ENCODE measurements at regions of chr10 and their contacts with region 1.

Region 1: GRCh38 chr10:73625884-73626752 is 15.2 kb downstream of the MYOZ1 start:
- DNase-seq: peak; percentile 84 to 99 (median 92)
- ATAC-seq: peak; percentile 90
- H3K4me3 ChIP-seq: peak overlapping the region; percentile 78 to 90
- H3K4me3 Mint-ChIP-seq: peak overlapping the region; percentile 95
- H3K27ac ChIP-seq: peak overlapping the region; percentile 84 to 86
- H3K27ac Mint-ChIP-seq: peak overlapping the region; percentile 98
- H3K4me1 ChIP-seq: peaks cover 16% of the 10 kb centered on the region
- H3K4me1 Mint-ChIP-seq: peaks cover 21% of the 10 kb centered on the region
- H3K27me3 ChIP-seq: no peaks in the 10 kb centered on the region
- H3K27me3 Mint-ChIP-seq: no peaks in the 10 kb centered on the region
- CTCF ChIP-seq: no peak

Region 2: GRCh38 chr10:73167783-73168464 is 458.2 kb before region 1 on chr10 and contains the starts of genes ECD and FAM149B1:
- CTCF ChIA-PET with region 1: no interaction called
- POLR2A ChIA-PET with region 1: no interaction called
- intact Hi-C with region 1: loop called (anchors 5 kb)
- DNase-seq: peak; percentile 74 to 96 (median 91)
- ATAC-seq: peak; percentile 93
- H3K4me3 ChIP-seq: peak within 1 kb of the TSS; percentile 77 to 92
- H3K4me3 Mint-ChIP-seq: peak within 1 kb of the TSS; percentile 100
- H3K27ac ChIP-seq: peak within 1 kb of the TSS; percentile 93 to 97
- H3K27ac Mint-ChIP-seq: peak within 1 kb of the TSS; percentile 100
- H3K4me1 ChIP-seq: peaks cover 29% of the 10 kb centered on the region
- H3K4me1 Mint-ChIP-seq: peaks cover 42% of the 10 kb centered on the region
- H3K27me3 ChIP-seq: no peaks in the 10 kb centered on the region
- H3K27me3 Mint-ChIP-seq: no peaks in the 10 kb centered on the region
- CTCF ChIP-seq: peak; percentile 16
- total RNA-seq, gene ECD: 56.5 to 59.1 TPM
- total RNA-seq, gene FAM149B1: 5.9 to 6.3 TPM

Region 3: GRCh38 chr10:73252445-73253224 is 373.5 kb before region 1 on chr10 and contains the start of gene MRPS16:
- CTCF ChIA-PET with region 1: no interaction called
- POLR2A ChIA-PET with region 1: no interaction called
- intact Hi-C with region 1: loop called (anchors 2 kb)
- DNase-seq: peak; percentile 86 to 97 (median 93)
- ATAC-seq: peak; percentile 90
- H3K4me3 ChIP-seq: peak within 1 kb of the TSS; percentile 87 to 96
- H3K4me3 Mint-ChIP-seq: peak within 1 kb of the TSS; percentile 99
- H3K27ac ChIP-seq: peak within 1 kb of the TSS; percentile 80 to 94
- H3K27ac Mint-ChIP-seq: peak within 1 kb of the TSS; percentile 96
- H3K4me1 ChIP-seq: peaks cover 19% of the 10 kb centered on the region
- H3K4me1 Mint-ChIP-seq: peaks cover 46% of the 10 kb centered on the region
- H3K27me3 ChIP-seq: no peaks in the 10 kb centered on the region
- H3K27me3 Mint-ChIP-seq: no peaks in the 10 kb centered on the region
- CTCF ChIP-seq: no peak
- total RNA-seq, gene MRPS16: 23.6 to 28.7 TPM

Region 4: GRCh38 chr10:73413528-73414229 is 212.4 kb before region 1 on chr10 and contains the start of gene ANXA7:
- CTCF ChIA-PET with region 1: no interaction called
- POLR2A ChIA-PET with region 1: interaction called, 4 read pairs
- intact Hi-C with region 1: loop called (anchors 1 to 2 kb)
- DNase-seq: peak; percentile 85 to 95 (median 94)
- ATAC-seq: peak; percentile 95
- H3K4me3 ChIP-seq: peak within 1 kb of the TSS; percentile 85 to 97
- H3K4me3 Mint-ChIP-seq: peak within 1 kb of the TSS; percentile 88
- H3K27ac ChIP-seq: peak within 1 kb of the TSS; percentile 95 to 96
- H3K27ac Mint-ChIP-seq: peak within 1 kb of the TSS; percentile 92
- H3K4me1 ChIP-seq: peaks cover 14% of the 10 kb centered on the region
- H3K4me1 Mint-ChIP-seq: peaks cover 47% of the 10 kb centered on the region
- H3K27me3 ChIP-seq: no peaks in the 10 kb centered on the region
- H3K27me3 Mint-ChIP-seq: no peaks in the 10 kb centered on the region
- CTCF ChIP-seq: no peak
- total RNA-seq, gene ANXA7: 94.8 to 95.6 TPM

Region 5: GRCh38 chr10:73743905-73744663 is 118.0 kb after region 1 on chr10 and contains the start of gene SEC24C:
- CTCF ChIA-PET with region 1: no interaction called
- POLR2A ChIA-PET with region 1: no interaction called
- intact Hi-C with region 1: loop called (anchors 1 to 5 kb)
- DNase-seq: peak; percentile 91 to 99 (median 95)
- ATAC-seq: peak; percentile 89
- H3K4me3 ChIP-seq: peak within 1 kb of the TSS; percentile 78 to 79
- H3K4me3 Mint-ChIP-seq: peak within 1 kb of the TSS; percentile 100
- H3K27ac ChIP-seq: peak within 1 kb of the TSS; percentile 94
- H3K27ac Mint-ChIP-seq: peak within 1 kb of the TSS; percentile 100
- H3K4me1 ChIP-seq: peaks cover 31% of the 10 kb centered on the region
- H3K4me1 Mint-ChIP-seq: peaks cover 38% of the 10 kb centered on the region
- H3K27me3 ChIP-seq: no peaks in the 10 kb centered on the region
- H3K27me3 Mint-ChIP-seq: no peaks in the 10 kb centered on the region
- CTCF ChIP-seq: no peak
- total RNA-seq, gene SEC24C: 76.9 to 78.6 TPM

Region 6: GRCh38 chr10:73810735-73811465 is 184.8 kb after region 1 on chr10:
- CTCF ChIA-PET with region 1: no interaction called
- POLR2A ChIA-PET with region 1: no interaction called
- intact Hi-C with region 1: loop called in 1 of 2 experiments (anchors 2 kb)
- DNase-seq: peak; percentile 19 to 79 (median 66)
- ATAC-seq: peak; percentile 12
- H3K4me3 ChIP-seq: peak overlapping the region; percentile 56 to 87
- H3K4me3 Mint-ChIP-seq: peak overlapping the region; percentile 89
- H3K27ac ChIP-seq: peak overlapping the region; percentile 71 to 91
- H3K27ac Mint-ChIP-seq: peak overlapping the region; percentile 95
- H3K4me1 ChIP-seq: peaks cover 48% of the 10 kb centered on the region
- H3K4me1 Mint-ChIP-seq: peaks cover 44% of the 10 kb centered on the region
- H3K27me3 ChIP-seq: no peaks in the 10 kb centered on the region
- H3K27me3 Mint-ChIP-seq: no peaks in the 10 kb centered on the region
- CTCF ChIP-seq: no peak

Measured in CD8-positive, alpha-beta T cell (primary cell).